ENCODE measurements at regions of chr2 and their contacts with region 1.

Region 1: DNA sequence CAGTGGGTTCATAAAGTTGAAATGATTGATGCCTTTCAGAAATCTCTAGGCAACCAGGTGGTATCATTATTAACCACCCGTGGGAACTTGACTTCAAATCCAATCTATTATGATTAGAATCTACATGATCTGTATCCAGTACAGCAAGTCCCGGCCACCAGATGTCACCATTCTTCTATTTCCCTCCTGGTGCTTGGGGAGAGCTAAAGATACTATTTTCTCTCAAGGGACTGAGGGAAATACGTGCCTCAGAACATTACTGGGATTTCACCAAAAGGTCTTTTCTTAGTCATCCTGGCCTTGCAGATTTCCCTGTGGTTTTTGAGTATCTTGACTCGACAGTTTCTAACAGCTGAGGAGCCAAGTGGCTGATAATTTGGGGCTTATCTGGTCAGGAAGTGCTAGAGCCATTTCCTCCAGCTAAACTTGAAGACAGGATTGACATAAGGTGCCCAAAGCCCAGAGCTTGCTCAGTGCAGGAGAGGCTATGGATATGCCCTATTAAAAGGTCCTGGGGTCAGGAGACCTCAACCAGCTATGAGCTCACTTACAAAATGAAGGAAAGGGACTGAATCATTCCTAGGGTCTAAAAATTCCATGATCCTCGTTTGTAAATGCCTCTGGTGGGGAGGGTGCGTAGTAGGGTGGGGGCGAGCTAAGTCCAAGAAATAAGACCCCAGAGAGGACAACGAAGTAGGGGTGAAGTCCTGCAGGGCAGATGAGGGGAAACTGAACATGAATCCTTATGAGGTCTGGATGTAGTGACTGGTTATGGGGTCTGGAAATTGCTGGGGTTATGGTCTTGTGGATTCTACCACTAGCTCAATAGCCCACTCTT is 135.4 kb upstream of the MGAT5 start:
- DNase-seq: peak; percentile 94
- H3K4me3 ChIP-seq: no peak overlapping the region
- CTCF ChIP-seq: peak; percentile 68

Region 2: DNA sequence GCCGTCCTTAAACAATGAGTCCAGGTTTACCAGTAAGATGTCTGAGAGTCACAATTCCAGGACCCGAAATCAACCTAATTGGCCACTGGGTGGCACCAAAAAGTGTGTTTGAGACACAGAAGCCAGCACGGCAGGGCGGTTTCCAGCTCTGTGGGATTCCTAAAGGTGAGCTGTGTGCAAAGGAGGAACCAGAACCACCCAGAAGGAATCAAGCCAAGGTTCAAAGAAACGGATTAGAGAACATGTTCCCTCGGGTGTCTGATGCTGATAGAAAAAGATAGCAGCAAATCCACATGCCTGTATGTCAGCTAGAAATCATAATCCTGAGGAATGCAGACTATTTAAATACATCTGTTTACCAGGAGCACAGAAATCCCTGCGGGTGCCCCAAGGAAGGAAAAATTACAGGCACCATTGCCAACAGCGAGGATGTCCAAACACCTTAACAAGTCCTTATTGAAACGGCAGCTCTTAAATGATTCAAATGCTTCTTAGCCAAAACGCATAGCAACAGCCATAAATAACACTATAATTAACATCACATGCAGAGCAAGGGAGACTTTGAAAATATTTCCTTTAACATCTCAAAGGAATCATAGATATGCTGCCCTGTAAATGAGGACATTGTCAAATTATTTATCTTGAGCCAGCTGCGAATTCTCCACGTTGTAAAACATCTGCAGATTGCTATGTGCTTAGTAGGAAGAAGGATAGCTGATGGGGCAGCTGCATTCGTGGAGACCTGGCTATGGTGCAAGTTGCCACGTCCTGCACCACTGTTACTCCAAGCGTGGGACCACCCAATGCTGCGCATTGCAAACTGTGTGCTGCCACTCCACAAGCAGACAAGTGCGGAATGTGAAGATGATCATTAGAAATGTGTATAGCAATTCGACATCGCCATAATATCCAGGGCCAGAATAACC is 231.5 kb before region 1 on chr2:
- CTCF ChIA-PET with region 1: interaction called, 87 read pairs
- POLR2A ChIA-PET with region 1: interaction called, 13 read pairs
- DNase-seq: peak; percentile 70
- H3K4me3 ChIP-seq: 0 out of 2 replicates have a peak overlapping the region, but pooled peaks have one; percentile 13
- CTCF ChIP-seq: peak; percentile 60

Region 3: DNA sequence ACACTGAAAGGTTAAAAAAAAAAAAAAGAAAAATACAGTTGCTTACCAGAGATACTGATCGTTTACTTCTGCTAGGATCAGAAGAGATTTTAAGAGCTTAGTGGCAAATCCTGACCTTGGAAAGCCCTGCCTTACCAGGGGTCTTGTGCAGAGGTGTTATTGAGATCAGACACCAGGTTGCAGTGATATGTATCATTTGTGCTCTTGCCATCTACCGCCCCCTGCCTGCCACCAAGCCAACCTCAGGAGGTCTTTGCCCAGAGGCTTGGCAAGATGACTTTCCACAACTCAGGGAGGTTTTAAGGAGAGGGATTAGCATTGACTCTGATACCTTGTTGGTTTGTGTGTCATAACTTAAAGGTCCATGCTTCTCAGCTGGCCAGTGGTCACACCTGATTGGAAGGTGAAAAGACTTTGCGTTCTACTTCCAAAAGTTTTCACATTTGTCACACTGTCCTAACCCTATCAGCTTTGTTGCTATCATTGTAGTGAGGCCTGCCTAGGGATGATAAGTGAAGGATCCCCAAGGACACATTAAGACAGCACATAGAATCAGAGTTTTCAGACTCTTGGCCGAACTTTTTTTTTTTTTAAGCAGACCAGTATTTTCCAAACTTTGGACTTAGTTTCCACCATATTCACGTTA is 89.2 kb after region 1 on chr2:
- CTCF ChIA-PET with region 1: interaction called, 103 read pairs
- POLR2A ChIA-PET with region 1: interaction called, 4 read pairs
- DNase-seq: no peak
- H3K4me3 ChIP-seq: no peak overlapping the region
- CTCF ChIP-seq: peak; percentile 61

Region 4: GRCh38 chr2:134245340-134245984 is 127.0 kb after region 1 on chr2:
- CTCF ChIA-PET with region 1: interaction called, 147 read pairs
- POLR2A ChIA-PET with region 1: interaction called, 3 read pairs
- DNase-seq: no peak
- H3K4me3 ChIP-seq: no peak overlapping the region
- CTCF ChIP-seq: peak; percentile 82

Region 5: DNA sequence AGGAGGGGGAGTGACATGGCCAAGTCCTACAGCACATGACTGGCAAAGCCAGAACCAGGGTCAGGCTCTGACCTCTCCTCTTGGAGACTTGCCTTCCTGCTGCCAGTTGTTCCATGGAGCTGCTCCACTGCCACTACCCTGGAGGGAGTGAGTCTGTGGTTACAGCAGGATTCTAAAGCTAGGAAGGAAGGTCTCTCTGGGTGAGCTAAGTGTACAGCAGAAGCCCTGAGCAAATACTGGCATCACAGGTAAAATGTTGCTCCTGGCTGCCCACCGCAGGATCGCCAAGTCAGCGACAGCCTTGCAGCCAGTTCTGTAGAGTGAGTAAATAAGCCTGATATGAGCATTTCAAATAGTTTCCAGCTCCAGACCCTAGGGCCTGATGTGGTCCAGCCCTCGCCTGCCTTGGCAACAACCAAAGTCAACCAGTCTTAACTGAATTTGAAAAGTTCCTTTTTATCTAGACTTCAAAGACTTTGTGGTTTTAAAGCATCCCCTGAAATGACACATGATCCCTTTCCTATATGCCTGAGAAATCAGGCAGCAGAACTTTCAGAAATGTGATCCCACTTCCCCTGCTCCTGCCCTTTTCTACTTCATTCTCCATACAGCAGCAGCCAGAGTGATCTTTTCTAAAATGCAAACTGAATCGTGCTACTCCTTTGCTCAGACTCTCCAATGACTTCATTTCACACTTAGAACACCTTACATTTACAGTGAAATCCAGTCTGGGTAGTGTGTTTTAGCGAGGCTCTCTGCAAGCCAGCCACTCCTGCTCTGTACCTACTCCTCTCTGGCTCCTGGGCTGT is 249.7 kb after region 1 on chr2:
- CTCF ChIA-PET with region 1: interaction called, 27 read pairs
- POLR2A ChIA-PET with region 1: no interaction called
- DNase-seq: no peak
- H3K4me3 ChIP-seq: no peak overlapping the region
- CTCF ChIP-seq: no peak

Region 6: GRCh38 chr2:134411828-134412638 is 293.5 kb after region 1 on chr2:
- CTCF ChIA-PET with region 1: interaction called, 118 read pairs
- POLR2A ChIA-PET with region 1: interaction called, 4 read pairs
- DNase-seq: no peak
- H3K4me3 ChIP-seq: no peak overlapping the region
- CTCF ChIP-seq: peak; percentile 86

Region 7: DNA sequence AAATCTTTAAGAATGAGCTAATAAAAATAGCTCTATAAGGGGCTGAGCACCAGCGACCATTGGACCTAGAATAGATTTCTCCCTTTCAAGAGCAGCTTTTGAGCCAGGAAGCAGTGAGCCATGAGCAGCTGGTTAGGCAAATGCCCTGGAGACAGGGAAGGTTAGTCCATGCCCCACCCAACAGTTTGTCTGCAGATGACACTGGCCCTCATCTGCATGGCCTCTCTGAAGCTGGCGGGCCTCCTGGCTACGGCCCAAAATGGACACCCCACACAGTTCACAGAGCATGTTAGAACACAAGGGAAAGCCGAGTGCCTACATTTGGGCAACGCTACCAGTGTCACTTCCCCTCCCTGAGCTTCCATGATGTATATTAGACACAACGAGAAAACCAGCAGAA is 336.4 kb after region 1 on chr2:
- CTCF ChIA-PET with region 1: interaction called, 154 read pairs
- POLR2A ChIA-PET with region 1: no interaction called
- DNase-seq: no peak
- H3K4me3 ChIP-seq: no peak overlapping the region
- CTCF ChIP-seq: no peak

Measured in AG04449 (cell line).